ENCODE measurements at regions of chr11 and their contacts with region 1.

Region 1: GRCh38 chr11:14308114-14308896 is 50.7 kb downstream of the RRAS2 start:
- DNase-seq: no peak
- H3K4me3 Mint-ChIP-seq: no peak overlapping the region
- H3K27ac Mint-ChIP-seq: no peak overlapping the region
- H3K4me1 Mint-ChIP-seq: peaks cover 24% of the 10 kb centered on the region
- H3K27me3 Mint-ChIP-seq: no peaks in the 10 kb centered on the region

Region 2: GRCh38 chr11:14320020-14320419 is 11.7 kb after region 1 on chr11:
- intact Hi-C with region 1: loop called (anchors 2 kb)
- DNase-seq: peak; percentile 83
- H3K4me3 Mint-ChIP-seq: peak overlapping the region; percentile 22
- H3K27ac Mint-ChIP-seq: peak overlapping the region; percentile 62
- H3K4me1 Mint-ChIP-seq: peaks cover 54% of the 10 kb centered on the region
- H3K27me3 Mint-ChIP-seq: no peaks in the 10 kb centered on the region

Region 3: GRCh38 chr11:14413307-14414069 is 105.2 kb after region 1 on chr11:
- intact Hi-C with region 1: loop called (anchors 2 kb)
- DNase-seq: no peak
- H3K4me3 Mint-ChIP-seq: no peak overlapping the region
- H3K27ac Mint-ChIP-seq: no peak overlapping the region
- H3K4me1 Mint-ChIP-seq: peaks cover 62% of the 10 kb centered on the region
- H3K27me3 Mint-ChIP-seq: no peaks in the 10 kb centered on the region